ENCODE measurements at regions of chr10 and their contacts with region 1.

Region 1: GRCh38 chr10:14583252-14583651 is 191.4 kb downstream of the FAM107B start:
- DNase-seq: peak; percentile 65 to 94 (median 82)
- ATAC-seq: peak; percentile 74
- H3K4me3 ChIP-seq: peak overlapping the region in 1 of 2 experiments; percentile 6
- H3K4me3 Mint-ChIP-seq: peak overlapping the region; percentile 81
- H3K27ac ChIP-seq: peak overlapping the region; percentile 57 to 82
- H3K27ac Mint-ChIP-seq: peak overlapping the region; percentile 97
- H3K4me1 ChIP-seq: peaks cover 94% of the 10 kb centered on the region
- H3K4me1 Mint-ChIP-seq: peaks cover 92% of the 10 kb centered on the region
- H3K27me3 ChIP-seq: no peaks in the 10 kb centered on the region
- H3K27me3 Mint-ChIP-seq: no peaks in the 10 kb centered on the region
- CTCF ChIP-seq: no peak

Region 2: GRCh38 chr10:14564268-14564744 is 18.9 kb before region 1 on chr10:
- CTCF ChIA-PET with region 1: interaction called, 4 read pairs
- POLR2A ChIA-PET with region 1: interaction called, 40 read pairs
- intact Hi-C with region 1: loop called (anchors 2 kb)
- DNase-seq: peak in 3 of 9 experiments; percentile 45 to 85 (median 75)
- ATAC-seq: peak; percentile 57
- H3K4me3 ChIP-seq: peak overlapping the region in 1 of 2 experiments; percentile 21
- H3K4me3 Mint-ChIP-seq: peak overlapping the region; percentile 80
- H3K27ac ChIP-seq: peak overlapping the region; percentile 77 to 79
- H3K27ac Mint-ChIP-seq: peak overlapping the region; percentile 98
- H3K4me1 ChIP-seq: peaks cover 90% of the 10 kb centered on the region
- H3K4me1 Mint-ChIP-seq: peaks cover 88% of the 10 kb centered on the region
- H3K27me3 ChIP-seq: no peaks in the 10 kb centered on the region
- H3K27me3 Mint-ChIP-seq: no peaks in the 10 kb centered on the region
- CTCF ChIP-seq: no peak

Region 3: GRCh38 chr10:14571866-14572507 is 11.3 kb before region 1 on chr10:
- CTCF ChIA-PET with region 1: interaction called, 5 read pairs
- POLR2A ChIA-PET with region 1: interaction called, 40 read pairs
- intact Hi-C with region 1: loop called (anchors 1 kb)
- DNase-seq: peak; percentile 46 to 91 (median 68)
- ATAC-seq: peak; percentile 66
- H3K4me3 ChIP-seq: peak overlapping the region; percentile 58 to 65
- H3K4me3 Mint-ChIP-seq: peak overlapping the region; percentile 88
- H3K27ac ChIP-seq: peak overlapping the region; percentile 82 to 89
- H3K27ac Mint-ChIP-seq: peak overlapping the region; percentile 97
- H3K4me1 ChIP-seq: peaks cover 66% of the 10 kb centered on the region
- H3K4me1 Mint-ChIP-seq: peaks cover 89% of the 10 kb centered on the region
- H3K27me3 ChIP-seq: no peaks in the 10 kb centered on the region
- H3K27me3 Mint-ChIP-seq: no peaks in the 10 kb centered on the region
- CTCF ChIP-seq: no peak

Measured in CD8-positive, alpha-beta T cell (primary cell).